Caco-2 (cell line): ENCODE measurements at regions of chr12 and their contacts with region 1.

Region 1: DNA sequence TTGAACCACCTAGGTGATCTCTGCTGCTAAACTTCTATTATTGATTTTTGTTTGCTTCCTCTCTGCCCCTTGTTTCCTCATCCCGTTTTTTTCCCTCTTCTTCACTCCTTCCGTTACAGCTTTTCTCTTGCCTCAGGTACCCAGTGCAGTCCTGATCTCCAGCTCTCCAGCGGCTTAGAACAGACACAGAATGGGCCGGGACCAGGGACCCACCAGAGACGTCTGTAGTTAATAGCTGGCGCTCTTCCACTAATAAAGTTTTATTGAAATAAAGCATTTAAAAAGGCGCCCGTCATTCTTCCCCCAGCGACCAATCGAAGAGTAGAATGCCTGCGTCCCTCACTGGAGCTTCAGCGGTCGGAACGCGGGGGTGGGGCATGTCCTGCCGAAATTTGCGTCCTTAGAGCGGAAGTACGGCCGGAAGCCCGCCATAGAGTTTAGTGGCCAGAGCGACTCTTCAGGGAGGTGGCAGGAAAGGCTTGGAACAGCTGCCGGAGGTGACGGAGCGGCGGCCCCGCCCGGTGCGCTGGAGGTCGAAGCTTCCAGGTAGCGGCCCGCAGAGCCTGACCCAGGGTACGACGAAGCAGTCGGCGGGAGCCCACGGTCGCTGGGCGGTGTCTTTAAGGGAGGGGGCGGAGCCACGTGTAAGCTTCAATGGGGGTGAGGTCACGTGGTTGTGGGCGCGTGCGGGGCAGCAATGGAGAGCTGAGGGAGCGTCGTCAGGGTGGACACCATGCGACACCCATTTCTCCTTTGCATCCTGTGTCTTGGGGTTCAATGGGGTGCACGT is at the start of gene COPS7A:
- DNase-seq: peak; percentile 100
- H3K4me3 ChIP-seq: peak within 1 kb of the TSS; percentile 63
- H3K4me3 Mint-ChIP-seq: peak within 1 kb of the TSS; percentile 73
- H3K27ac Mint-ChIP-seq: peak within 1 kb of the TSS; percentile 80
- H3K4me1 ChIP-seq: peaks cover 11% of the 10 kb centered on the region; the same call in 1 of the 2 replicates
- H3K4me1 Mint-ChIP-seq: peaks cover 11% of the 10 kb centered on the region
- H3K27me3 ChIP-seq: no peaks in the 10 kb centered on the region
- H3K27me3 Mint-ChIP-seq: no peaks in the 10 kb centered on the region
- CTCF ChIP-seq: no peak
- total RNA-seq, gene COPS7A: 56.8 and 61.9 TPM in 2 replicates

Region 2: DNA sequence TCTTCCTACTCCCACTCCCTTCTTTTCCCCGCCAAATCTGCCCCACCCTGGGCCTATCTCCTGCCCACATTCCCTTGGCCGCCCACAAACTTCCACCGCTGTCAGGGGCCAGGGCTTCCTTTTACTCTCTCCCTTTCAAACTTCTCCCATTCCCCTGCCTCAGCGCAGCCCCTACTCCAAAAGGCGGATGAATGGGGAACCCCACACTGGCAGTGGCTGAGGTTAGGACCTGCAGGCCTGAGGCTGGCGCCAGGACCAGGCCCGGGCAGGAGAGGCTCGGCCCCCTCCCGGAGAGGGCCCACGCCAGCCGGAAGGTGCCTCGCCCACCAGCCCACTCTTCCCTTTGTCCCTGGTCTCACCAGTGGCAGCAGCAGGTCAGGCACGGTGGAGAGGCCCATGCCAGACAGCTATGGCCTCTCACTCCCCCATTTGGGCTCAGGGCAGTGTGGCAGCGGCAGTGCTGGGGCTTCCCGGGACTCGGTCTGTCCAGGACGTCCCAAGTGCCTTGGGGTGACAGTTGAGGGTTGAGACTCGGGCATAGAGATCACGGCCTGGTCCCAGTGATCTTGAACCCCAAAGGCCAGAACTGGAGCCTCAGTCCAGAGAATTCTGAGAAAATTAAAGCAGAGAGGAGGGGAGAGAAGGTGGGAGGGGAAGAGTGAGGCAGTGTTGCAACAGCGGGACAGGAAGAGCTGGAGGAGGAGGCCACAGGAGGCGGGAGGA is 382.2 kb before region 1 on chr12 and contains the start of gene TNFRSF1A:
- CTCF ChIA-PET with region 1: no interaction called
- POLR2A ChIA-PET with region 1: no interaction called
- intact Hi-C with region 1: no loop called
- DNase-seq: peak; percentile 82
- H3K4me3 ChIP-seq: peak within 1 kb of the TSS; percentile 76
- H3K4me3 Mint-ChIP-seq: no peak within 1 kb of the TSS
- H3K27ac Mint-ChIP-seq: no peak within 1 kb of the TSS
- H3K4me1 ChIP-seq: peaks cover 56% of the 10 kb centered on the region
- H3K4me1 Mint-ChIP-seq: peaks cover 36% of the 10 kb centered on the region
- H3K27me3 ChIP-seq: no peaks in the 10 kb centered on the region
- H3K27me3 Mint-ChIP-seq: no peaks in the 10 kb centered on the region
- CTCF ChIP-seq: no peak
- total RNA-seq, gene TNFRSF1A: 79.0 and 79.4 TPM in 2 replicates

Region 3: GRCh38 chr12:6652391-6652790 is 71.4 kb before region 1 on chr12:
- CTCF ChIA-PET with region 1: interaction called, 10 read pairs
- POLR2A ChIA-PET with region 1: no interaction called
- intact Hi-C with region 1: no loop called
- DNase-seq: no peak
- H3K4me3 ChIP-seq: no peak overlapping the region
- H3K4me3 Mint-ChIP-seq: no peak overlapping the region
- H3K27ac Mint-ChIP-seq: no peak overlapping the region
- H3K4me1 ChIP-seq: no peaks in the 10 kb centered on the region
- H3K4me1 Mint-ChIP-seq: no peaks in the 10 kb centered on the region
- H3K27me3 ChIP-seq: no peaks in the 10 kb centered on the region
- H3K27me3 Mint-ChIP-seq: no peaks in the 10 kb centered on the region
- CTCF ChIP-seq: no peak

Region 4: GRCh38 chr12:6662906-6663742 is 60.7 kb before region 1 on chr12 and contains the start of gene ING4:
- CTCF ChIA-PET with region 1: no interaction called
- POLR2A ChIA-PET with region 1: interaction called, 4 read pairs
- intact Hi-C with region 1: loop called (anchors 1 kb)
- DNase-seq: peak; percentile 99 to 100
- H3K4me3 ChIP-seq: peak within 1 kb of the TSS; percentile 60
- H3K4me3 Mint-ChIP-seq: peak within 1 kb of the TSS; percentile 79
- H3K27ac Mint-ChIP-seq: peak within 1 kb of the TSS; percentile 83
- H3K4me1 ChIP-seq: peaks cover 12% of the 10 kb centered on the region; the same call in 1 of the 2 replicates
- H3K4me1 Mint-ChIP-seq: peaks cover 14% of the 10 kb centered on the region
- H3K27me3 ChIP-seq: no peaks in the 10 kb centered on the region
- H3K27me3 Mint-ChIP-seq: no peaks in the 10 kb centered on the region
- CTCF ChIP-seq: peak in 1 of 2 experiments; percentile 0
- total RNA-seq, gene ING4: 31.6 and 32.8 TPM in 2 replicates

Region 5: DNA sequence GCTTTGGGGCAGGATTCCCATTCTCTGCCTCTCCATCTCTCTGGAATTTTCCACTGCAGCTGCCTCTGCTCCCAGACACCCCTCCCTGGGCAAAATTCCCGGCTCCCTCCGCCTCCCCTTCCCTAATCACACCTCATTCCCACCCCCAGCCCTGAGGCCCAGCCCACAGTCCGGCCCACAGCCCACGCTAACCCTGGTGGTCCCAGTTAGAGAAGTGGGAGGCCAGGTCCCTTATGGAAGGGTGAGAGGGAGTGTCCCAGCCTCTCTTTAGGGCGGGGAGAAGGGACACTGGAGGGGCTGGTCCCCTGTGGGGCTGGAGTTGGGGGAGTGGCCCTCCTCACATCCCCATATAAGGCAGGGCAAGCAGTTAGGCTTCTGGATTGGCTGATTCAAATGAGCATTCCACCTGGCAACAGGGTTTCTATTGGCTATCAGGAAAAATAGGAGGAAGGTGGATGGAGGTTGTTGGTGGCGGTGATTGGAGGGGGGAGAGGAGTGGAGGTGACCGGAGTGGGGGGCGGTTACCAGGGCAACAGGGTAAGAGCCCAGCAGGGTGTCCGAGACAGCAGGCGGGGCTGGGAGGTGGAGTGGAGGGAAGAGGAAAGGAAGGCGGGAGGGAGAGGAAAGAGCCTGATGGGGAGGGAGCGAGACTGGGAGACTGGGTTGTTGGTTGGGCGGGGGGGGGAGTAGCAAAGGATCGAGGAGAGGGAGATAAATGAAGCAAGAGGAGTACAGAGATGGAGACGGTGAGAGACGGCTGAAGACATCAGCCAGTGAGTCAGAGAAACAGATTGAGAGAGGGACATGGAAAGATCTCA is 40.4 kb after region 1 on chr12:
- CTCF ChIA-PET with region 1: interaction called, 22 read pairs
- POLR2A ChIA-PET with region 1: interaction called, 22 read pairs
- intact Hi-C with region 1: no loop called
- DNase-seq: peak; percentile 89 to 95
- H3K4me3 ChIP-seq: peak overlapping the region; percentile 10; the same call in 1 of the 2 replicates
- H3K4me3 Mint-ChIP-seq: peak overlapping the region; percentile 71
- H3K27ac Mint-ChIP-seq: peak overlapping the region; percentile 79
- H3K4me1 ChIP-seq: peaks cover 54% of the 10 kb centered on the region
- H3K4me1 Mint-ChIP-seq: peaks cover 53% of the 10 kb centered on the region
- H3K27me3 ChIP-seq: no peaks in the 10 kb centered on the region
- H3K27me3 Mint-ChIP-seq: no peaks in the 10 kb centered on the region
- CTCF ChIP-seq: no peak